ENCODE measurements at regions of chr6 and their contacts with region 1.

Region 1: DNA sequence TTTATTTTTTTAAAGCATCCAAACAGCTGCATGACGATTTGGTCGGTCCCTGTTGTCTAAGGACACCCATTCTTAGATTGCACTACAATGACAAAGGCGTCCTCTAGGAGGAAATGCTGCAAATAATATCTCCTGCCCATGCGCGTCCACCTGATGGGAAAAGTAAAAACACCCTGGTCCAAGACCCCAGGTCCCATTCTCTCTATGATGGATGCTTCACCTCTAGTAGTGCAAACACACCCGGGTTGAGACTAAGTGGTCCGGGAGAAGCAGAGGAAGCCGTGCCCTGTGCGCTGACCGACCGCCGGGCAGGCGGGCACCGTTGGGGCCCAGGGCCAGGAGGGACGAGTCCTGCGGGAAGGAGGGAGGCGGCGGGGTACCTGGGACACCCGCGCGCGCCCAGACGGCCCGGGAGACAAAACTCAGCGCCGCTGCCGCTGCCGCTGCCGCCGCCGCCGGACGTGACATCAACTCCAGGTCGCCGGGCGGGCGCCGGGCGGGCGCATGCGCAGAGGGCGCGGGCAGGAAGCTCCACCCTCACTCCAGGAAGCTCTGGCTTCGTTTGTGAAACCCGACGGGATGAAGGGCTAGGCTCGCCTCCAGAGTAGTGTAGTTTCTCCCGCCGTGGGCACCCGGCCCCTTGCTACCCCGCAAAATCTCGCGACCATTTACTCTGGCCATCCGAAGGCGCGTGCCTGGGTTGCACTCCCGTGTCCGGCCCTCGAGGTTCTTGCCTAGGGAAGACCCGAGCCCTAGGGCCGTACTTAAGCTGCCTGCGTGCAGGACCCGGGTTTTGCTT is at the start of gene TBC1D7:
- DNase-seq: peak; percentile 92 to 95 (median 94)
- H3K4me3 ChIP-seq: peak within 1 kb of the TSS; percentile 89 to 91
- H3K4me3 Mint-ChIP-seq: peak within 1 kb of the TSS; percentile 94 to 98 (median 96)
- H3K27ac ChIP-seq: peak within 1 kb of the TSS; percentile 90
- H3K27ac Mint-ChIP-seq: peak within 1 kb of the TSS; percentile 96 to 99 (median 98)
- H3K4me1 ChIP-seq: peaks cover 23% of the 10 kb centered on the region
- H3K4me1 Mint-ChIP-seq: peaks cover 9 to 33% (median 22%) of the 10 kb centered on the region in 4 donors
- H3K27me3 ChIP-seq: no peaks in the 10 kb centered on the region
- H3K27me3 Mint-ChIP-seq: no peaks in the 10 kb centered on the region
- total RNA-seq, gene TBC1D7: 12.6 to 13.2 TPM

Region 2: DNA sequence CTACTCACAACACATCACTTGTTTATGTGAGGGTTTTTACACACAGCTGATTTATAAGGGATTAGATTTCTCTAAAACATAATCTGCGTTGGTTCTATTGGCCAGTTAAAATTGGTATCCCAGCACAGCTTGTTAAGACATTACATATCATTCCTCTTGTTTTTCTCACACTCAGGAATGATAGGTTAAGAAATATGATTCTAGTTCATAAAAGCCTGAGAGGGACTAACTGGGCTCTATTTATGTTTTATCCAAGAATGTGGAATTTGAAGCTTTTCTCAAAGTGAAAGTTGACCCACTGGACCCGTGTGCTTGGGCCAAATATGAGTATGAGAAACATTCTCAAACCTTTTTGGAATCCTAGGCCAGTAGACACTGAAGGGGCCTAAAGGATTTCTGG is 1673.4 kb before region 1 on chr6:
- CTCF ChIA-PET with region 1: interaction called, 10 read pairs
- POLR2A ChIA-PET with region 1: no interaction called
- intact Hi-C with region 1: no loop called
- DNase-seq: no peak
- H3K4me3 ChIP-seq: no peak overlapping the region
- H3K4me3 Mint-ChIP-seq: no peak overlapping the region
- H3K27ac ChIP-seq: no peak overlapping the region
- H3K27ac Mint-ChIP-seq: no peak overlapping the region
- H3K4me1 ChIP-seq: no peaks in the 10 kb centered on the region
- H3K4me1 Mint-ChIP-seq: peaks cover 0 to 7% (median 2%) of the 10 kb centered on the region in 4 donors
- H3K27me3 ChIP-seq: no peaks in the 10 kb centered on the region
- H3K27me3 Mint-ChIP-seq: peaks cover 8 to 9% of the 10 kb centered on the region in 2 donors

Region 3: DNA sequence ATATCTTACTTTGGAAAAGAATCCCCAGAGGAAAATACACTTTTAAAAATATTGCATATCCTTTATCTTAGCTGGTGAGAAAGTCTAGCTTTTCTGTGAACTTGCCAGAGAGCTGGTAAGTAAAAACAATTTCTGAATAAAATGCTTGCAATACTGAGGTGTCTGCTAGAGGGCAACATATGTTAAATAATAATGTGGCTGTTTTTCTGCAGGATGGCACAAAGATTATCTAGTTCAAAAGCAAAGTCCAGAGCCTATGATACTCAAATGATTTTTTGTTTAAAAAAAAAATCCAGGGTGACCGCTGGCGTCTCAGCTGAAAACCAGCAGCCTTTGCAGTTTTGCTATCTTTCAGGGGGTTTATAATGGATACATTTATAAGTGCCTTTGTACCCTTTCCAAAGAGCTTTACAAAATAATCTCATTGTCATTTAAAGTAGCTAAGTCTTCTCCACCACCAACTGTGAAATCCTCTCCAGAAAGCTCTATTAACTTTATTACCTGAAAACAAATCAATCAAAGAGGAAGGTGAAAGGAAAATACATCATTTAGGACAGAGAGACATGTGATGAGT is 416.8 kb before region 1 on chr6:
- CTCF ChIA-PET with region 1: interaction called, 10 read pairs
- POLR2A ChIA-PET with region 1: no interaction called
- intact Hi-C with region 1: no loop called
- DNase-seq: no peak
- H3K4me3 ChIP-seq: no peak overlapping the region
- H3K4me3 Mint-ChIP-seq: no peak overlapping the region
- H3K27ac ChIP-seq: no peak overlapping the region
- H3K27ac Mint-ChIP-seq: no peak overlapping the region
- H3K4me1 ChIP-seq: no peaks in the 10 kb centered on the region
- H3K4me1 Mint-ChIP-seq: no peaks in the 10 kb centered on the region
- H3K27me3 ChIP-seq: no peaks in the 10 kb centered on the region
- H3K27me3 Mint-ChIP-seq: peaks cover 4 to 6% of the 10 kb centered on the region in 2 donors

Region 4: GRCh38 chr6:13349811-13350506 is 21.7 kb after region 1 on chr6:
- CTCF ChIA-PET with region 1: interaction called, 15 read pairs
- POLR2A ChIA-PET with region 1: interaction called, 5 read pairs
- intact Hi-C with region 1: no loop called
- DNase-seq: no peak
- H3K4me3 ChIP-seq: no peak overlapping the region
- H3K4me3 Mint-ChIP-seq: no peak overlapping the region
- H3K27ac ChIP-seq: no peak overlapping the region
- H3K27ac Mint-ChIP-seq: peak overlapping the region in 1 of 7 donors; percentile 58
- H3K4me1 ChIP-seq: peaks cover 9% of the 10 kb centered on the region
- H3K4me1 Mint-ChIP-seq: peaks cover 12 to 16% (median 15%) of the 10 kb centered on the region in 4 donors
- H3K27me3 ChIP-seq: no peaks in the 10 kb centered on the region
- H3K27me3 Mint-ChIP-seq: no peaks in the 10 kb centered on the region

Region 5: DNA sequence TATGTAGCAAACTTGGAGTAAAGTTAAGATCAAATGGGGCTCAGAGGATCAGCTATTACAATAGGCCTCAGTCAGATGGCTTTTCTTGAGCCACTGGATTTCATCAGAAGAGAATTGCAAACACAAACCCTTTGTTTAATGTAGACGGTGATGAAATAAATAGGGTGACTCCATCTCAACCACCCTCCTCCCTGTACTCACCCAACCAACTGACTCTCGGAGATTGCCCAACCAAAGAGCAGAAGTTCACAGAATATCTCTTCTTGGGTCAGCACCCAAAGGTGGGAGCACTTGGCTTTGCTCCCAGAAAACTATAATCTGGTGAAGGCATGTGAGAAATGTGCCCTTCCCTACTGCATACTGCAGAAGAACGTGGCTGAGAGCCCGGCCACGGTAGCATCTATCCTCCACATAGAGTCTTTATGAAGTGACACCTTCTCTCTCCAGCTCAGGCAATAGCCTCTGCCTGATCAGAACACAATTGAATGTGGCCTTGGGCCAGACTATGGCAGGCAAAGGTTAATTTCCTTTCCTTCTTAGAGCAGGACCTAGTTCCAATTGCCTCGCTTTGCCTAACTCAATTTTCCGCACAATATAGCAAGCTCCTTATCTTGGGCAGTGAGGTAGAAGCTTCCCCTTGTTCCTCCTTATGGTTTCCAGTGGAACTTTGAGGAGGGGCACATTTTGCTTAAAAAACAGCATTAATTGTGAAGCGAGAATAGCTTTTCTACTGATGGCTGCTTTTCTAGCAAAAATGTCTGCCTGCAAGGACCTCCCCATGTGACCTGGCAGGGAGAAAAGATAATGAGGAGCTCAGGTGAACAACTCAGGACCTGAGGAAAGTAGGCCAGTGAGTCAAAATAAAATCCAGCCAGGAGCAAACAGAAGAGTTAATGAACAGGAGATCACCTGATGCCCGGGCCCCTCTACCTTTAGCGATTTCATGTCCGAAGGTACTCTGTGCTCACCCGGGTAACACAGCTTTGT is 79.7 kb after region 1 on chr6:
- CTCF ChIA-PET with region 1: no interaction called
- POLR2A ChIA-PET with region 1: no interaction called
- intact Hi-C with region 1: no loop called
- DNase-seq: no peak
- H3K4me3 ChIP-seq: no peak overlapping the region
- H3K4me3 Mint-ChIP-seq: no peak overlapping the region
- H3K27ac ChIP-seq: no peak overlapping the region
- H3K27ac Mint-ChIP-seq: no peak overlapping the region
- H3K4me1 ChIP-seq: no peaks in the 10 kb centered on the region
- H3K4me1 Mint-ChIP-seq: no peaks in the 10 kb centered on the region
- H3K27me3 ChIP-seq: no peaks in the 10 kb centered on the region
- H3K27me3 Mint-ChIP-seq: no peaks in the 10 kb centered on the region

Region 6: DNA sequence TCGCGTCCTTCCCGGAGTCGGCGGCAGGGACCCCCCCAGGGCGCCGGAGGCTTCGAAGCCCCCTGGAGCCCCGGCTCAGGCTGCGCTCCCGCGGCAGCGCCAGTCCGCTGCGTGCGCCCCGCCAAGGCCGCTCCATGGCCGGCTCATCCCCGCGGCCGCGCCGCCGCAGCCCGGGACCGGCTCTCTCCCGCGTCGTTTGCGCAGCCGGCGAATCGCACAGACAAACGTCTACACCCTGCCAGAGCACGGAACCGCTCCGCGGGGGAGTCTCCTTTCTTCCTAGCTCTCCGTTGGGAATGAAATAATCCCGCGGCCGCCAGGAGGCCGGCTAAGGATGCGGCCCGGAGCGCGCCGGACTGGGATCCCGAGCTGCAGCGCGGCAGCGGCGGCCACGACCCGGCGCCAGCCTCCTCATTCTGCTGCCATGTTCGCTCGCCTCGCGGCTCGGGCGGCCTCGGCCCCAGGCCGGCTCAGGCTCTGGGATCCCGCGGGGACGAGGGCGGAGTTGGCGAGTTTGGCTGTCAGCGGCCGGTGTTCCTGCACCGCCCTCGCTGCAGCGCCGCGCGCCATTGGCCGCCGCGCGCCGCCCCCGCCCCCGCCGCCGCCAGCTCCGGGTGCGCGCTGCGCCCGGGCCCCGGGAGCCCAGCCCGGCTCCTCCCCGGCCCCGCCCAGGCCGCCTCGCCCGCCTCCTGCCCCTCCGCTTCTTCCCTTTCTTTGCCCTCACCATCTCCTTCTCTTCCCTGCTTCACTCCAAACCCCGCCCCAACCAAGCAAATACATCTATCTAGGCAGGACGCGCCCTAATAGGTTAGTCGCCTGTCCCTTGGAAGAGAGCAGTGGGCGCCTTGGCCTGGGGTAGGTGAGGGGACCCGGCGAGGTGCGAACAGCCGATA is 159.1 kb after region 1 on chr6 and contains the start of gene GFOD1:
- CTCF ChIA-PET with region 1: interaction called, 3 read pairs
- POLR2A ChIA-PET with region 1: interaction called, 14 read pairs
- intact Hi-C with region 1: loop called (anchors 1 kb)
- DNase-seq: peak; percentile 55 to 68 (median 61)
- H3K4me3 ChIP-seq: peak within 1 kb of the TSS; percentile 67 to 69
- H3K4me3 Mint-ChIP-seq: peak within 1 kb of the TSS; percentile 88 to 94 (median 92)
- H3K27ac ChIP-seq: peak within 1 kb of the TSS; percentile 4
- H3K27ac Mint-ChIP-seq: peak within 1 kb of the TSS; percentile 42 to 78 (median 73)
- H3K4me1 ChIP-seq: peaks cover 12% of the 10 kb centered on the region
- H3K4me1 Mint-ChIP-seq: peaks cover 16 to 36% (median 30%) of the 10 kb centered on the region in 4 donors
- H3K27me3 ChIP-seq: no peaks in the 10 kb centered on the region
- H3K27me3 Mint-ChIP-seq: peaks cover 5 to 6% of the 10 kb centered on the region in 2 donors
- total RNA-seq, gene GFOD1: 0.97 to 1.1 TPM

Measured in CD4-positive, alpha-beta memory T cell (primary cell).